Activated CD8-positive, alpha-beta memory T cell treated with anti-CD3 and anti-CD28 coated beads, Interleukin-2, amount 10 ng/mL, durations not matched to agents 7 days and 5 days (primary cell): ENCODE measurements at regions of chr22 and their contacts with region 1.

Region 1: DNA sequence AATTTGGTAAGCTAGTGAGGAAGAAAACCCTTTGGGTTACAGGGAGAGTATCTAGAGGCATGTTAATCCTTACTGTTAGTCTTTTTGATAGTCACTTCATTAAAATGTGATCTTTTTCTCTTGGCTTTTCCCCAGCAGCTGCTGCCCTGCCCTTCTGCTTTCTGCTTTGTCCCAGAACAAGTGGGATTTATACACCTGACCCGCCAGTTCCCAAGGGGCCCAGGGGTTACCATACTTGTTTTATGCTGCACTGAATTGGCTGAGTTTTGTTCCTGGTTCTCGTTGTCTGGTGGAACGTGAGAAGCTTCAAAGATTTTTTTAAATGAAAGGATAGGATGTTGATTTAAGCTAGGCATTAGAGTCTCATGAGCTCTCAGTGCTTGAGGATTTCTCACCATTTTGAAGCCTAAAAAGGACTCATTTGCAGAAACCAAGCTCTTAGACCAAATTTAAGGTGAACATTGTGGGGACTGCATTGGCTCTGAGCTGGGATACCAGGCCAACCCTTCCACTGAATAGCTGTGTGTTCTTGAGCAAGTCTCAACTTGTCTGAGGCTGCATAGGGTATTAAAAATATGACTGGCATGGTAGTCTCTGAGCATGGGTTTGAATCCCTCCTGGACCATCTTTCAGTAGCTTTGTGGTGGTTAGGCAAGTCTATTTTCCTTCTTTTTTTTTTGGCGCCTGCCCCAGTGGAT is 6.6 kb downstream of the LIMK2 start:
- DNase-seq: no peak
- ATAC-seq: no peak
- H3K4me3 Mint-ChIP-seq: no peak overlapping the region
- H3K27ac Mint-ChIP-seq: peak overlapping the region; percentile 6
- H3K4me1 Mint-ChIP-seq: peaks cover 47% of the 10 kb centered on the region
- H3K27me3 Mint-ChIP-seq: no peaks in the 10 kb centered on the region

Region 2: DNA sequence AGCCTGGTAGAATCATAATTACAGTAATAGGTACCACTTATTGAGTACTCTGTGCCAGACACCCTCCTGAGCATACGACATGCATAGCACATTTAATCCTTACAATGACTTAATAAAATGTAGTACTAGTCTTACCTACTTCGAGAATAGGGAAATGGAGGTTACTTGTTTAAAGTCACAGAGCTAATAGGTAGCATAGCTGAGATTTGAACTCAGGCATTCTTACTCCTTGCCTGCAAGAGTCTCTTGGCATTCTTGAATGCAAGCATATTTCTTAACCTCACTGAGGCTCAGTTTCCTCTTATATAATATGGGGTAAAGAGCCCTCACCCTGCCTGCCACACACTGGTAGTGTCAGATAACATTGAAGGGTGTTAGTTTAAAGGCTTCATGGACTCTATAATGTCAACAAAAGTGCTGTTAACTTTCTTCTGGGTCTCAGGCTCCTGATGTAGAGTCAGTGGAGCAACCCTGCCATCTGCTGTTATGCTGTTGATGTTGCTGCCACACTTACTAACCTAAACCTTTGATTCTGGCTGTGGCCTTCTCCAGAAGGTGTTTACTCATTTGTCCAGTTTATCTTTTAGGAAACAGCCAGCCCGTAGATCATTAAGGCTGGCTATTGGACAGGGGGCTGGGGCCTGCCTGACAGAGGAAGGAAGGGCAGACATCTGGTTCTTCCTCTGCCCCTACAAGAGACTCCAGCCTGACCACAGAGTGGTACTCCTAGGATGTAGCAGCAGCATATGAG is 12.3 kb after region 1 on chr22:
- CTCF ChIA-PET with region 1: interaction called, 55 read pairs
- DNase-seq: peak; percentile 54
- ATAC-seq: peak; percentile 72
- H3K4me3 Mint-ChIP-seq: no peak overlapping the region
- H3K27ac Mint-ChIP-seq: peak overlapping the region; percentile 60
- H3K4me1 Mint-ChIP-seq: peaks cover 47% of the 10 kb centered on the region
- H3K27me3 Mint-ChIP-seq: no peaks in the 10 kb centered on the region

Region 3: GRCh38 chr22:31262312-31263080 is 43.8 kb after region 1 on chr22:
- CTCF ChIA-PET with region 1: no interaction called
- DNase-seq: no peak
- ATAC-seq: no peak
- H3K4me3 Mint-ChIP-seq: no peak overlapping the region
- H3K27ac Mint-ChIP-seq: no peak overlapping the region
- H3K4me1 Mint-ChIP-seq: no peaks in the 10 kb centered on the region
- H3K27me3 Mint-ChIP-seq: no peaks in the 10 kb centered on the region